ENCODE measurements at regions of chr5 and their contacts with region 1.

Region 1: DNA sequence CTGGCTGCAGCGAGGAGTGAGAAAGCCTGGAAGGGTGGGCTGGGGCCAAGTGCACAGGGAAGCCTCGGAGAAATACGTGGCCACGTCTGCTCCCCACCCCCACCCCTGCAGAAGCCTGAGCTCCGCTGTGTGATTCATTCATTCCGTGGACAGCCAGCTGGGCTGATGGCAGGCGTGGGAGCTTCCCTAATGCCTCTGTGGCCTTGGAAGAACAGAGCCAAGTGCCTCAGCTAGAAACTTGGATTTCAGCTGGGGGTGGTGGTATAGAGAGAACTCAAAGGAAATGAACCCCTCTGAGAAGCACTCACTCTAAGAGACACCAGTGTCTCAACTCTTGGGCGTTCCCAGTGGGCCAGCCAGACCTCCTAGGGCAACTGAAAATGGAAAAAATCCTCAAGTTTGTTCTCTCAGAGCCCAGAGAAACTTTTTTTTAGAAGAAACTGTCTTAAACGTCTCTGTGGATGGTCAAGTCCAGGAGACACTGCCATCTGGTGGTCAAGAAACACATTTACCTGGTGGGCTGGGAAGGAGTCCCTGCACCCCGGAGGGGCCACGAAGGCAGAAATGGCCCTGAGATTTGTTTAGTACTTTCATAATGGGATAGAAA is 18.0 kb downstream of the ATOX1 start:
- DNase-seq: peak; percentile 70 to 82 (median 78)
- ATAC-seq: peak; percentile 67 to 88 (median 86)
- H3K4me3 ChIP-seq: peak overlapping the region in 4 of 12 donors; percentile 1 to 30 (median 10)
- H3K27ac ChIP-seq: peak overlapping the region; percentile 8 to 78 (median 60)
- H3K4me1 ChIP-seq: peaks cover 0 to 44% (median 20%) of the 10 kb centered on the region in 12 donors
- H3K27me3 ChIP-seq: no peaks in the 10 kb centered on the region
- CTCF ChIP-seq: peak; percentile 86 to 96 (median 89)
- POLR2A ChIP-seq: no peak

Region 2: GRCh38 chr5:151447174-151448037 is 293.0 kb before region 1 on chr5 and contains the start of gene SLC36A1:
- intact Hi-C with region 1: loop called in 9 of 10 experiments (anchors 2 to 10 kb)
- DNase-seq: peak; percentile 93 to 97 (median 94)
- ATAC-seq: peak; percentile 88 to 98 (median 96)
- H3K4me3 ChIP-seq: peak within 1 kb of the TSS; percentile 32 to 86 (median 76)
- H3K27ac ChIP-seq: peak within 1 kb of the TSS in 8 of 12 donors; percentile 15 to 74 (median 58)
- H3K4me1 ChIP-seq: peaks cover 0 to 24% (median 3%) of the 10 kb centered on the region in 12 donors
- H3K27me3 ChIP-seq: peaks cover 0 to 6% (median 0%) of the 10 kb centered on the region in 9 donors
- CTCF ChIP-seq: peak; percentile 94 to 99 (median 97)
- POLR2A ChIP-seq: peak in 1 of 2 donors; percentile 57
- total RNA-seq, gene SLC36A1: 1.7 to 18.8 (median 2.8) TPM

Region 3: DNA sequence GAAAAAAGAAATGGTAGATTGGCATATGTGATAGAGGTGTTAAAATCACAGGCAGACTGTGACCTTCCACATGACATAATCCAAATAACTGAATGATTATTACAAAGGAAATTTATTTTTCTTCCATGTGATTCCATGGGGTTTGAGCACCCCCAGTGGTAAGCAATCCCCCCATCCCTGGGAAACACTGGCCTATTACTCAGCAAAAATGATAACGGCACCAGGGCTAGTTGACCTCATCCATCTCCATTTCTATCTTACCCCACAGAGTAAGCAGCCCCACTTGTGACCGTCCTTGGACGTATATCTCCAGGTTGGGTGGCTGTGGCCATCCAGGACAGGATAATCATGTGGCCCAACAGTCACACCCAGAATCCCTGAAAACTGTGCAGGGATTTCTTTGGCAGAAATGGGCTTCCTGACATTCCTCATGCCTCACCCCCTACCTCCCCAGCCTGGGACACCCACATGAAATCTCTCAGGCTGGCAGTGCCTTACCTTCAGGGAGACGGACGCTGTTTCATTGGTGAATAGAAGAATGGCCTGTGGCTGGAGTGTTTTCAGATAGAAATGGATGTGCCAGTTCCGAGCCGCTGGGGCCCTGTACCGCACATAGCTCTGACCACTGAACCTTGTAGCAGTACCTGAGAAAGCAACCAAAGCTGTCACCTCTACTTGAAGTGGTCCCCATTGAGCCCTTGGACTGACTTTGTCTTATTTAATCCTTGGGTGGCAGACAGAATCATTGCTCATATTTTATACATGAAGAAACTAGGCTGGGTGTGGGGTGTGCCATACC is 223.1 kb before region 1 on chr5:
- intact Hi-C with region 1: loop called in 3 of 10 experiments (anchors 5 to 10 kb)
- DNase-seq: no peak
- ATAC-seq: no peak
- H3K4me3 ChIP-seq: no peak overlapping the region
- H3K27ac ChIP-seq: no peak overlapping the region
- H3K4me1 ChIP-seq: no peaks in the 10 kb centered on the region
- H3K27me3 ChIP-seq: no peaks in the 10 kb centered on the region
- CTCF ChIP-seq: no peak
- POLR2A ChIP-seq: no peak

Region 4: GRCh38 chr5:151523335-151523734 is 217.1 kb before region 1 on chr5:
- intact Hi-C with region 1: loop called in 3 of 10 experiments (anchors 5 to 10 kb)
- DNase-seq: no peak
- ATAC-seq: peak in 1 of 4 donors; percentile 53
- H3K4me3 ChIP-seq: no peak overlapping the region
- H3K27ac ChIP-seq: no peak overlapping the region
- H3K4me1 ChIP-seq: no peaks in the 10 kb centered on the region
- H3K27me3 ChIP-seq: no peaks in the 10 kb centered on the region
- CTCF ChIP-seq: peak in 8 of 12 donors; percentile 13 to 39 (median 28)
- POLR2A ChIP-seq: no peak

Region 5: DNA sequence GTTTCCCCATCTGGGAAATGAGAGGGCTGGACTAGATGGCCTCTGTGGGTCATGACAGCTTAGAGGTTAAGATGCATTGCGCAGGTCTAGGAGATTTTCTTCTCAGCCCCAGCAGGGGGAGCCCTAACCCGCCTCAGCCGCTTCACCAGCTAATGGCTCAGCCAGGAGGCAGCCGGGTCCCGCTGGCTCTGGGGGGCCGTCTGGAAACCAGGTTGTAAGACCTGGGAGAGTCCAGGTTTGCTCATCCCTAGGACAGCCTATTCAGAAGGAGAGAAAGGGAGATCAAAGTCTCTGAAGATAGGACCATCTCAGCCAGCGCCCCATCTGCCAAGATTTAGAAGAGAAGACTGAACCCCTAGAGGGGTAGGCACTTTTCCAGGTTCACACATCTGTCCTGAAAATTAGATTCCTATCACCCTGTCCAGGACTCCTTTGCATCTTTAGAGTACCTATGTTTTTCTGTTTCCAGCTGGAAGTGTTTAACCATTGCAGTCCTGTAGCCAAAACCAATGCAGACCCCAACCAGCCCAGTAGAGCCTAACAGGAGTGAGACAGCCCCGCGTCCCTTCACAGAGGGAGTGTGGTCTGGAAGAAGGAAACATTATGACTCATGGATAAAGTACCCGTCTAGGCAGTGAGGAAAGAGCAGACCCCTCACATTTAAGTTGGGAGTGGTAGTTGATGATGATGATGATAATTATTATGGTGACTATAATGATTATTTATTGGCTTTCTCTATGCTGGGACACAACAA is 81.3 kb before region 1 on chr5:
- intact Hi-C with region 1: loop called (anchors 1 to 2 kb)
- DNase-seq: peak; percentile 84 to 92 (median 87)
- ATAC-seq: peak; percentile 75 to 87 (median 86)
- H3K4me3 ChIP-seq: no peak overlapping the region
- H3K27ac ChIP-seq: peak overlapping the region in 9 of 12 donors; percentile 4 to 52 (median 28)
- H3K4me1 ChIP-seq: peaks cover 3 to 39% (median 23%) of the 10 kb centered on the region in 12 donors
- H3K27me3 ChIP-seq: no peaks in the 10 kb centered on the region
- CTCF ChIP-seq: peak; percentile 80 to 98 (median 92)
- POLR2A ChIP-seq: no peak

Region 6: GRCh38 chr5:151675611-151676313 is 64.7 kb before region 1 on chr5:
- intact Hi-C with region 1: loop called in 1 of 10 experiments (anchors 5 kb)
- DNase-seq: no peak
- ATAC-seq: peak in 1 of 4 donors; percentile 46
- H3K4me3 ChIP-seq: peak overlapping the region in 3 of 12 donors; percentile 8 to 22 (median 19)
- H3K27ac ChIP-seq: peak overlapping the region; percentile 79 to 94 (median 89)
- H3K4me1 ChIP-seq: peaks cover 25 to 98% (median 93%) of the 10 kb centered on the region in 12 donors
- H3K27me3 ChIP-seq: no peaks in the 10 kb centered on the region
- CTCF ChIP-seq: no peak
- POLR2A ChIP-seq: no peak

Region 7: GRCh38 chr5:152514827-152515397 is 774.5 kb after region 1 on chr5:
- intact Hi-C with region 1: loop called in 1 of 10 experiments (anchors 5 kb)
- DNase-seq: no peak
- ATAC-seq: peak in 1 of 4 donors; percentile 38
- H3K4me3 ChIP-seq: no peak overlapping the region
- H3K27ac ChIP-seq: no peak overlapping the region
- H3K4me1 ChIP-seq: peaks cover 0 to 6% (median 0%) of the 10 kb centered on the region in 12 donors
- H3K27me3 ChIP-seq: peaks cover 0 to 3% (median 0%) of the 10 kb centered on the region in 9 donors
- CTCF ChIP-seq: peak; percentile 20 to 51 (median 31)
- POLR2A ChIP-seq: no peak

Measured in heart left ventricle (tissue), 16 donors.